Activated CD8-positive, alpha-beta T cell treated with anti-CD3 and anti-CD28 coated beads, Interleukin-2, amount 10 ng/mL, durations not matched to agents 7 days and 5 days (primary cell): ENCODE measurements at regions of chr4 and their contacts with region 1.

Region 1: DNA sequence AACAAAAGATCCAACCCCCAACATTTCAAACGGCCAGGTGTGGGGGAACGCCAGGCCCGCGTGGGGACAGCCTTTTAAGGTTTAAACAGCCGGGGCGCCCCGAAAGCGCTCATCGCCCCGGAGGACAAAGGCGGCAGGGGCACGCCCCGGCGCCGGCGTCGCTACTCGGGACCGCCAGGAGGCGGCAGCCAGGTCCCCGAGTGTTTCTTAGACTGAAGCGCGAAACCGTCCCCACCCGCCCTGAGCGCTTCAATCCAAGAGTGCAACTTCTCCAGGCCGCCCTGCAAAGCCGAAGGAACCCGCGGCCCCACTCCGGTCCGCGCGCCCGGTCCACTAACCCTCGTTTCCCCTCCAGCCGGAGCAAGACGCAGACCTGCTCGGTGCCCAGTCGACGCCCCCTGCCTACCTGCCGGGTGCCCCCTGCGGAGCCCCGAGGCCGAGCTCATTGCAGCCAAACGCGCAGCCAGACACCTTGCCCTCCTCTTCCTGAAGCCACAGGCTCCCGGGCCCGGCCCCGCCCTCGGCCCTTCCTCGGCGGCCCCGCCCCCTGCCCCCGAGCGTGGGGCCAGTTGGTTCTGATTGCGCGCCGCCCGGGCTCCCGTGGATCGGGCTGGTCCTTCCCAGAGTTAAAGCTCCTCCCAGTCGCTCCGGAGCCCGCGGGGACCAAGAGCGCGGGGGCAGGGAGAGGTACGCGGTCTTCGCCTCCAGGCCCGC is at the start of gene CASP6:
- DNase-seq: peak; percentile 86
- ATAC-seq: peak; percentile 89
- H3K4me3 Mint-ChIP-seq: peak within 1 kb of the TSS; percentile 95
- H3K27ac Mint-ChIP-seq: peak within 1 kb of the TSS; percentile 91
- H3K4me1 Mint-ChIP-seq: peaks cover 32% of the 10 kb centered on the region
- H3K27me3 Mint-ChIP-seq: no peaks in the 10 kb centered on the region
- total RNA-seq, gene CASP6: 24.1 to 25.5 TPM

Region 2: DNA sequence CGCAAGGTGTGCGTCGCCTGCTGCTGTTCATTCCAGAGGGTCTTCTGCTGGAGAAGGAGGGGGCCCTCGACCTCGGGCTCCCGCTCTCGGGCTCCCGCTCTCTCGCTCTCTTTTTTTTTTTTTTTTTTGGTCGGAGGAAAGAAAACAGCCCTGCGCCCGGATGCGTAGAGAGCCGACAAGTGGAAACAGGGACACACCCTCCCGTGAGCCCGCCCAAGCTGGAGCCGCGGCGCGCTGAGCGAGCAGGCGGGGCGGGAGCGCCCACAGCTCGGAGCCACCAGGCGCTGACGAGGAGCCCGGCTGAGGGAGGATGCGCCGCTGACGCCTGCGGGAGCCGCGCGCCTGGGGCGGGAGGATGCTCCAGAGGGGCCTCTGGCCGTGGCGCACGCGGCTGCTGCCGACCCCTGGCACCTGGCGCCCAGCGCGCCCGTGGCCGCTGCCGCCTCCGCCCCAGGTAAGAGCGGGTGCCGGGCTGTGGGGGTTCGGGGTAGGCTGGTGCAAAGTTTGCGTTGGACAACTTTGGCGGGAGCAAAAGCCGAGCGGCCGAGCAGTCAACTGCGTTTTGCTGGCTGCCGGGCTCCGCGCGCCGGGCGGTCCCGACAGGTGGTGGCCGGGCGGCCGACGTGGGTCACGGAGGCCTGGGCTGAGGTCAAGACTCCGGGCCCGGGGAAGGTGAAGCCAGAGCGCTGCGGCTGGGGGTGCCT is 143.0 kb before region 1 on chr4 and contains the start of gene MCUB:
- CTCF ChIA-PET with region 1: interaction called, 6 read pairs
- POLR2A ChIA-PET with region 1: interaction called, 26 read pairs
- DNase-seq: peak; percentile 95
- ATAC-seq: peak; percentile 95
- H3K4me3 Mint-ChIP-seq: peak within 1 kb of the TSS; percentile 92
- H3K27ac Mint-ChIP-seq: peak within 1 kb of the TSS; percentile 97
- H3K4me1 Mint-ChIP-seq: peaks cover 47% of the 10 kb centered on the region
- H3K27me3 Mint-ChIP-seq: no peaks in the 10 kb centered on the region
- total RNA-seq, gene MCUB: 104 to 109 TPM

Region 3: DNA sequence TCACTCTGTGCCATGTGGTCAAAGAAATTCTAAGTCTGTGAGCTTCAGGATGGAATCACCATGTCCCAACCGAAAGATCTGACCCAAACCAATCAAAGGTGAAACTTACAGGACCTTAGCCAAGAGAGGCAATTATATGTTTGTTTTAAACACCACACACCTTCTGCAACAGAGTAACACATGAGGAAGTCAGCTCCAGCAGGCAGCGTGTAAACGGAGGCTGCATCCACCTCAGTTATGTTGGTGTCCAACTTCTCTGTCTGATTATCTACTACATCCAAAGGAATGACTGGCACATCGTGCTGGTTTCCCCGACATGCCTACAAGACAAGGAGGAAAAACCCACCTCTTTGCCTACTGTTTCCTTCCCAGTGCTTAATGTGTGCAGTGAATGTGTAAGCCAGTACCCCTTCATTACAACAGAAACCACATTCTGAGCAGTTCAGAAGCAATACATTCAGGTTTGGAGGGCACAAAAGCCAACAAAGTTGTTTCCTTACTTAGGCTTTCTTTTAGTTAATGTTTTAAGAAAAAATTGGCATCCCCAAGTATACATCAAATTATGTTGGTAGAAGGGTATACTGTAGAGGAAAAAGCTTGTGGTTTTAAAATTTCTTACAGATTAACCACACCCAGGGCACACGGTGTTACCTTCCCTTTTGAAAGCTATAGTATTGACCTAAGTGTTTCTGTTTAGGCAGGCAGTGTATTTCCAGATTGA is 12.3 kb before region 1 on chr4:
- CTCF ChIA-PET with region 1: interaction called, 3 read pairs
- POLR2A ChIA-PET with region 1: interaction called, 15 read pairs
- DNase-seq: peak; percentile 33
- ATAC-seq: peak; percentile 93
- H3K4me3 Mint-ChIP-seq: peak overlapping the region; percentile 33
- H3K27ac Mint-ChIP-seq: peak overlapping the region; percentile 82
- H3K4me1 Mint-ChIP-seq: peaks cover 29% of the 10 kb centered on the region
- H3K27me3 Mint-ChIP-seq: no peaks in the 10 kb centered on the region